ENCODE measurements at regions of chr15 and their contacts with region 1.

Region 1: DNA sequence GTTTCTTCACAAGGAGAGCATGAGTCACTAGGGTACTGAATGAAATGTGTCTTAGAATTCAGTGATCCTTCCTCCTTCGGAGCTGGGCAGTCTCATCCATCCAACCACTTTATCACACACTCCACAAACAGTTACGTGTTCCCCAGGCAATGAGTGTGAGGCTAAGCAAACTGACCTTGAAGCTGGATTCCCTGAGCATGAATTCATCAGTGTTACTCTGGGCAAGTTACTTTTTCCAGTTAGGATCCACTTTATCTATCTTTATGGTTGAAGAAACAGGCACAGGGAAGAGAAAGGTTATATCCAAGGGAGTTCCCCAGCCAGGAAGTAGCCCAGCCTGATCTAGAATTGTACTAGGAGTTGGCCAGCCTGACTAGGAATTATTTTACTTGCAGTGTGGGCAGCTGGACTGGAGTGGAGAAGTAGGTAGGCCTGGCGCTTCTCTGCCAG is 17.1 kb upstream of the GCNT3 start:
- DNase-seq: peak; percentile 61
- H3K4me3 Mint-ChIP-seq: peak overlapping the region; percentile 16
- H3K27ac Mint-ChIP-seq: peak overlapping the region; percentile 95
- H3K4me1 Mint-ChIP-seq: peaks cover 61% of the 10 kb centered on the region
- H3K27me3 Mint-ChIP-seq: no peaks in the 10 kb centered on the region
- CTCF ChIP-seq: no peak

Region 2: DNA sequence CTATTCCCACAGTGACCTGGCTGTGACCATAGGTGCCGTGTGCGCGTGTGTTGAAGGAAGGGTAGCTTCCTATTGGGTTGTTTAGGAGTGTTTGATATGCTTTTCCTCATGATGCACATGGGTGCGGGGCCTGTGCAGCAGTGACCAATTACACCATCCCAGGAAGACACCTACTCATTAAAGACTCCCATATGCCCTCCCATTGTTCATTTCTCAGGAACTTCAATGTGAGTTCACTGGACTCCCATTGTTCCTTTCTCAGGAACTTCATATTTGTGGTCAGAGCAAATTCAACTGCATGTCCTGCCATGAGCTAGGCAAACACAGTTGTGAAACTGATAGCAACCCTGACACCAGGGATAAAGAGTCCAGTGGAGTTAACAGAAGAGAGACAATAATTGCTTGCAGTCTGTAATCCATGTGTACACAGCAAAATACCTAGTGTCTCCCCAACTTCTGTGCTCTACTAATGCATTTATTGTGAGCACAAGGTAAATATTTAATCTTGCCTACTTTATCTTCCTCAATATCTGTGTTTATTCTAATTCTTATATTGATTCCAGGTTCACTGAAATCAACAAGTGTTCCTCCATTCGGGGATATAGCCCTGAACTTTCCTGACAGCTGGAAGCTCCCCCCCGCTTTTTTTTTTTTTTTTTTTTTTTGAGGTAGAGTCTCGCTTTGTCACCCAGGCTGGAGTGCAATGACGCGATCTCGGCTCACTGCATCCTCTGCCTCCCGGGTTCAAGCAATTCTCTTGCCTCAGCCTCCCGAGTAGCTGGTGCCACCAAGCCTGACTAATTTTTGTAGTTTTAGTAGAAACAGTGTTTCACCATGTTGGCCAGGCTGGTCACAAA is 40.4 kb before region 1 on chr15:
- CTCF ChIA-PET with region 1: interaction called, 7 read pairs
- intact Hi-C with region 1: loop called (anchors 2 kb)
- DNase-seq: peak; percentile 66
- H3K4me3 Mint-ChIP-seq: no peak overlapping the region
- H3K27ac Mint-ChIP-seq: peak overlapping the region; percentile 56
- H3K4me1 Mint-ChIP-seq: peaks cover 50% of the 10 kb centered on the region
- H3K27me3 Mint-ChIP-seq: no peaks in the 10 kb centered on the region
- CTCF ChIP-seq: no peak

Measured in Calu3 (cell line).